Head of caudate nucleus (tissue), 42 donors: ENCODE measurements at regions of chr7 and their contacts with region 1.

Region 1: GRCh38 chr7:135281363-135281949 is 47.8 kb downstream of the STRA8 start:
- DNase-seq: peak; percentile 57 to 95 (median 87)

Region 2: GRCh38 chr7:135300913-135301765 is 19.7 kb after region 1 on chr7:
- intact Hi-C with region 1: no loop called
- DNase-seq: peak in 1 of 42 donors; percentile 29

Region 3: DNA sequence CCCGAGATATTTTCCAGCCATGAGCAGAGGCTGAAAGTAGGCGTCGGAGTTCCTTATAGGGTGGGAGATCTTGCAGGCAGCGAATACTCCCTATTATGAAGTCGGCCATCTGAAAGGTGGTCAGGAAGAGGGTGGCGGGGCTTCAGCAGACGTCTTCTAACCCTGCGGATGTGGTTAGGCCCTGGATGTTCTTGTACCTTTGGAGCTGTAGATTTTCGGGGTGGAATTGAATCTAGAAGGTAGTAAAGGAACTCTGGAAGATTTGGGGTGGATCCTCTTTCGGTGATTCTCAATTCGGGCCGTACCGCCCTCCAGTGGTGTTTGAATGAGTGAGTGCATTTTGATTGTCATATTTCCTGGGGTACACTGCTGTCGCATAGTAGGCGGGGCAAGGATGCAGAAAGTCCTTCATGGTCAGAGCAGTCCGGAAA is 276.9 kb after region 1 on chr7:
- intact Hi-C with region 1: loop called (anchors 5 kb)
- DNase-seq: peak; percentile 16 to 81 (median 58)

Region 4: DNA sequence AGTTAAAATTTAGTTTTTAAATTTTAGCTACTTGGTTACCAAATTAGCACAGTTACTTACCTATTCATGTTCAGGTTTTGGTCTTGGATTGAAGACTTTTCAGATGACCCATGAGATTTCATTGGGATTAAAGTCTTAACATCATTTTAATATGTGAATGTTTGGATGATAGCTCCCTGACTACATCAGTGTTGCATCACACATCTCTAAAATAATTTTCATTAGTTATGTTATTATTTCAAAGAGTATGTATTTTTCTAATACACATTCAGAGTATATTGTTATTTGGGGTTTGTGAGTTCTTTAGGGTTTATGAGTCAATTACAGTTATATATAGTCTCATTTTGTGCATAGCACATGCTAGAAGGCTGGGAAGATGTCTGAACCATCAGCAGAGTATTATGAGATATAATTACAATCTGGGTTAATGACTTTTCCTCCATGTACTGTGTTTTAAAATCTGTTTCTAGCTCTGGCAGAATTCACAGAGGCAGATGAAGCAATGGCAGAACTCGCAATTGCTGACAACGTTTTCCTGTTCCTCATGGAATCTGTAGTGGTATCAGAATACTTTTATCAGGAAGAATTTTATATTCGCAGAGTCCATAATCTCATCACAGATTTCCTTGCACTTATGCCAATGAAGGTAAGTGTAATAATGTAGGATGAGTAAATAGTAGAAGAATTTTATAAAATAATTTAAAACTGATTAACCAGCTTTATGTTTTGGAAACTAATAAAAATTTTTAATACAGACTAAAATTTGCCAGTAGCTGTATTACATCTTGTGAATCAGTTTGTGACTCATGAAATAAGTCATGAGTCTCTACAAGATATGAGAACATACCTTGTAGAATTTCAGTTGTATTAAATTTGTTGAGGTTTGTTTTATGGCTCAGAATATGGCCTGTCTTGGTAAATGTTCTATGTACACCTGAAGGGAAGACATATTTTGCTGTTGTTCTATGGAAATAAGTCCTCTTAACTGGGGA is 303.2 kb after region 1 on chr7:
- intact Hi-C with region 1: no loop called
- DNase-seq: no peak

Region 5: DNA sequence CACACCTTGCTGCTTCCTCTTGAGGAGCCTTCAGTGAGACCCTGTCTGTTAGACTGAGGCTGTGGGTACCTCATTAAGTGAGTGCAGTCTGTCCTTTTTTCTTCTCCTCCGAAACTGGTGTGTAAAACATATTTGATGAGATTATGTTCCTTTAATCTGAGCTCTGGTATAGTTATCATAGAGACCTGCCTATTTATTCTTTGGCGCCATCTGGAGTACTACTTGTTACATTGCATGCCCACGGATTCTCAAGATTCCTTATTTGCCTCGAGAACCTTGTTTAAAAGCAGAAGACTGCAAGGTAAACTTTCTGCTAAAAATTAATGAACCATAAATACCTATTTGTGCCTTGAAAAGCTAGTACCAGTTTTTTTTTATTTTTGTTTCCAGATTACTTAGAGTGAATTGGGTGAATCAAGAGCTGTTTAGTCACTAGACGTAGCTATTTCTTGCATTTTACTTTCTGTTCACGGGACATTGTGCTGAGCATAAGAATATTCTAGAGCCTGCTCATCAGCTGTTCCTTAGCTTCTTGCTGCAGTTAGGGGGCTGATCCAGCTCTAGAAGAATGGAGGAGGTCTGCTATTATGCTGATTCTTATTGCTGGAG is 363.9 kb after region 1 on chr7:
- intact Hi-C with region 1: loop called (anchors 5 kb)
- DNase-seq: peak in 18 of 42 donors; percentile 15 to 76 (median 36)